ENCODE measurements at regions of chr22 and their contacts with region 1.

Region 1: GRCh38 chr22:30742291-30743256 is 47.9 kb downstream of the OSBP2 start:
- DNase-seq: no peak
- H3K4me3 ChIP-seq: no peak overlapping the region
- H3K27ac ChIP-seq: no peak overlapping the region
- H3K4me1 ChIP-seq: no peaks in the 10 kb centered on the region
- H3K27me3 ChIP-seq: no peaks in the 10 kb centered on the region
- CTCF ChIP-seq: no peak
- POLR2A ChIP-seq: no peak

Region 2: DNA sequence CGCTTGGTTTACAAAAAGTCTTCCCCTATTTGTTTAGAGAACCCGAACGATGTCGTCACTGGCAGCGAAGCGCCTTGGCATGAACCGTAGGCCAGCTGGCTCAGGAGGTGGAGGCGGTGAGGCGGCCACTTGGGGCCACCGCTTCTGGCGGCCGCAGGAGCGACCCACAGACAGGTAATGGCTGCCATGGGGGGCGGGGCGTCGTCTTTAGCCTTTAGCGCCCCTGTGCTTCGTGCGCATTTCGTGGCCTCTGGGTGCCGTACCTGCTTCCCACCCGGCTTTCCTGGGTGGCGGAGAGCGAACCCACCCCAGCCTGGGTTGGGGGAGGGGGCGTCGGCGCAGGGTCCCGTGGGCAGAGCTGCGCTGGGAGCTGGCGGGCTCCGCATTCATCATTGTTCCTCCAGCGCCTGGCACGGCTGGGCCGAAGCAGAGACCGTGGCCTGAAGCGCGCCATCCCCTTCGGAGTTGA is 48.4 kb before region 1 on chr22:
- intact Hi-C with region 1: loop called in 1 of 2 experiments (anchors 10 kb)
- DNase-seq: peak; percentile 69 to 84 (median 77)
- H3K4me3 ChIP-seq: peak overlapping the region in 3 of 4 donors; percentile 15 to 59 (median 18)
- H3K27ac ChIP-seq: peak overlapping the region in 4 of 5 donors; percentile 77 to 90 (median 88)
- H3K4me1 ChIP-seq: peaks cover 7 to 13% of the 10 kb centered on the region in 2 donors
- H3K27me3 ChIP-seq: no peaks in the 10 kb centered on the region
- CTCF ChIP-seq: peak in 2 of 6 experiments; percentile 8 to 18
- POLR2A ChIP-seq: peak in 1 of 2 donors; percentile 73